ENCODE measurements at regions of chr4 and their contacts with region 1.

Region 1: DNA sequence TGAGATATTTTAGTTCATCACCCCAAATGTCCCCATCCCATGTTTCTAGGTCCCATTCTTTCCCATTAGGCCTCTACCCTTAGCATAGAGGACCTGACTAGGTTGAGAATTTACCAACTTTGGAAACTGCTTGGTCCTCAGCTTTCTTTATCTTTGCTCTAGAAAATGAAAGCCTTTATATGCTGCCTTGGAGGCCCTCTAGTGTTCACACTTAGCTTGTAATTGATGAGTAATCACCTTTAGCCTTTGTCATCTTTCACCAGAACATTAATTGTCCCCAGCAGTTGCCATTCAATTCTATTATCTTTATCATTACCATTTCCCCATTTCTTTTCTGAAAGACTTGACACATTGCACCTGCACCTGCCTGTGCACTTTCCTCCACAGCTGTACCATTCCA is 589.2 kb upstream of the NR3C2 start:
- DNase-seq: peak; percentile 54
- H3K4me3 Mint-ChIP-seq: no peak overlapping the region
- H3K27ac Mint-ChIP-seq: no peak overlapping the region
- H3K4me1 Mint-ChIP-seq: no peaks in the 10 kb centered on the region
- H3K27me3 Mint-ChIP-seq: no peaks in the 10 kb centered on the region
- CTCF ChIP-seq: peak; percentile 29

Region 2: GRCh38 chr4:147984065-147984777 is 1047.2 kb before region 1 on chr4:
- CTCF ChIA-PET with region 1: interaction called, 8 read pairs
- POLR2A ChIA-PET with region 1: no interaction called
- intact Hi-C with region 1: loop called (anchors 1 kb)
- DNase-seq: peak; percentile 59
- H3K4me3 Mint-ChIP-seq: no peak overlapping the region
- H3K27ac Mint-ChIP-seq: no peak overlapping the region
- H3K4me1 Mint-ChIP-seq: peaks cover 6% of the 10 kb centered on the region
- H3K27me3 Mint-ChIP-seq: no peaks in the 10 kb centered on the region
- CTCF ChIP-seq: peak; percentile 79

Region 3: GRCh38 chr4:148441986-148442831 is 589.2 kb before region 1 on chr4 and contains the start of gene NR3C2:
- CTCF ChIA-PET with region 1: interaction called, 6 read pairs
- POLR2A ChIA-PET with region 1: no interaction called
- intact Hi-C with region 1: loop called (anchors 2 kb)
- DNase-seq: peak; percentile 99
- H3K4me3 Mint-ChIP-seq: peak within 1 kb of the TSS; percentile 98
- H3K27ac Mint-ChIP-seq: no peak within 1 kb of the TSS
- H3K4me1 Mint-ChIP-seq: peaks cover 15% of the 10 kb centered on the region
- H3K27me3 Mint-ChIP-seq: peaks cover 18% of the 10 kb centered on the region
- CTCF ChIP-seq: no peak
- total RNA-seq, gene NR3C2: 0.21 and 0.34 TPM in 2 replicates

Measured in MCF 10A (cell line).